CD4-positive, alpha-beta memory T cell (primary cell): ENCODE measurements at regions of chr7 and their contacts with region 1.

Region 1: GRCh38 chr7:22822486-22823141 is at the start of gene TOMM7:
- DNase-seq: peak; percentile 84 to 92 (median 91)
- H3K4me3 ChIP-seq: peak within 1 kb of the TSS; percentile 83 to 98
- H3K4me3 Mint-ChIP-seq: peak within 1 kb of the TSS; percentile 94 to 99 (median 98)
- H3K27ac ChIP-seq: peak within 1 kb of the TSS; percentile 85
- H3K27ac Mint-ChIP-seq: peak within 1 kb of the TSS; percentile 94 to 100 (median 98)
- H3K4me1 ChIP-seq: peaks cover 40% of the 10 kb centered on the region
- H3K4me1 Mint-ChIP-seq: peaks cover 19 to 50% (median 33%) of the 10 kb centered on the region in 4 donors
- H3K27me3 ChIP-seq: no peaks in the 10 kb centered on the region
- H3K27me3 Mint-ChIP-seq: peaks cover 5 to 17% of the 10 kb centered on the region in 2 donors
- total RNA-seq, gene TOMM7: 686 to 701 TPM

Region 2: DNA sequence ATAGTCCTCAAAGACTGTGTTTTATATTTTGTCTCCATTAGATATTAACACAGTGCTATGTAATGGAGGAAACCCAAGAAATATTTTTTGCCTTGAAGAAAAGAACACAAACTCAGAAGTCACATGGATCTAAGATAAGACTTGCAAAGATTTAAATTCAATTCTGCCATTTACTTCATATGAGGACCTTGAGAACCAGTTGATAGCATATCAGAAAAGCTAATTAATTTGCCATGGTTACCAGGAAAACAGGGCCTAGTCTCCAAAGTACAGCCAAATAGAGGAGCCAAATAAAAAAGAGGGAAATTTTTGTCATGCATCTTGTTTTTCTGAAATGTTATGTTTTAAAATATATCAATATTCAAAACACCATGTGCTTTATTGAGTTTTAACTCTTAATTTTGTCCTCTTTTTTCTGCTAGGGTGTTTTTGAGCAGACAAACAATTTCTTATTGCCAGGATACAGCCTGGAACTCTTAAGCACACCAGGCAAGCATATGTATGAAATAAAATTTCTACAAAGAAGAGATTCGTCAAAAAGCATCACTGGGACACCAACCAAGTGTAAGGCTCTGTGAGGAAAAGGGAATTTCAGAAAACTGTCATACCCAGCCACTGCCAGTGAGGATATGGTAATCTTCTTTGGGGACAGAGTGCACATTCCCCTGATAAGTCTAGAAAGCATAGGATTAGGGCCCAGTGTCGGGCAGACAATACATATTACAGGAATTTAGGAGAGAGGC is 10.7 kb after region 1 on chr7:
- CTCF ChIA-PET with region 1: no interaction called
- POLR2A ChIA-PET with region 1: no interaction called
- intact Hi-C with region 1: no loop called
- DNase-seq: no peak
- H3K4me3 ChIP-seq: no peak overlapping the region
- H3K4me3 Mint-ChIP-seq: no peak overlapping the region
- H3K27ac ChIP-seq: no peak overlapping the region
- H3K27ac Mint-ChIP-seq: no peak overlapping the region
- H3K4me1 ChIP-seq: no peaks in the 10 kb centered on the region
- H3K4me1 Mint-ChIP-seq: no peaks in the 10 kb centered on the region
- H3K27me3 ChIP-seq: no peaks in the 10 kb centered on the region
- H3K27me3 Mint-ChIP-seq: peaks cover 2 to 8% of the 10 kb centered on the region in 2 donors

Region 3: GRCh38 chr7:22854158-22855048 is 31.8 kb after region 1 on chr7:
- CTCF ChIA-PET with region 1: interaction called, 9 read pairs
- POLR2A ChIA-PET with region 1: interaction called, 4 read pairs
- intact Hi-C with region 1: loop called (anchors 1 kb)
- DNase-seq: peak; percentile 40 to 84 (median 77)
- H3K4me3 ChIP-seq: peak overlapping the region; percentile 63 to 93
- H3K4me3 Mint-ChIP-seq: peak overlapping the region; percentile 88 to 95 (median 95)
- H3K27ac ChIP-seq: peak overlapping the region; percentile 90
- H3K27ac Mint-ChIP-seq: peak overlapping the region; percentile 79 to 96 (median 93)
- H3K4me1 ChIP-seq: peaks cover 20% of the 10 kb centered on the region
- H3K4me1 Mint-ChIP-seq: peaks cover 8 to 20% (median 18%) of the 10 kb centered on the region in 4 donors
- H3K27me3 ChIP-seq: no peaks in the 10 kb centered on the region
- H3K27me3 Mint-ChIP-seq: peaks cover 0 to 2% of the 10 kb centered on the region in 2 donors

Region 4: DNA sequence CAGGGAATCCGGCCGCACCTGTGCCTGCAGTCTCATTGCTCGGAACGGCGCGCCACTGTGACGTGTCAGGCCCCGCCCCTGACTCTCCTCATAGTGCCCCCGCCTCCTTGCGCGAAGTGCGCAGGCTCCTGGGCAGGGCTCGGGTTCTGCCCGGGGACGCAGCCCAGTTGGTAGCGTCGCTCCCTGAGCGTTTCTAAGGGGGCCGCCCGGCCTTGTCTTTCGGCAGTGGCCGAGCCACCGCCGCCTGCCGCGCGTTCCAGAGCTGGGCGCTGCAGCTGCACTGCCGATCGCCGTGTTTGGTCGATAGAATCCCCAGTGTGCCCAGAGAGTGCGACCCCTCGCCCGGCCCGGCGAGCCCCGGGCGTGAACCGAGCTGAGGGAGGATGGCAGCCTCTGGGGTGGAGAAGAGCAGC is 283.0 kb after region 1 on chr7 and contains the start of gene KLHL7:
- CTCF ChIA-PET with region 1: no interaction called
- POLR2A ChIA-PET with region 1: interaction called, 4 read pairs
- intact Hi-C with region 1: loop called (anchors 1 kb)
- DNase-seq: peak; percentile 91 to 96 (median 93)
- H3K4me3 ChIP-seq: peak within 1 kb of the TSS; percentile 83 to 98
- H3K4me3 Mint-ChIP-seq: peak within 1 kb of the TSS; percentile 93 to 99 (median 97)
- H3K27ac ChIP-seq: peak within 1 kb of the TSS; percentile 89
- H3K27ac Mint-ChIP-seq: peak within 1 kb of the TSS; percentile 93 to 98 (median 96)
- H3K4me1 ChIP-seq: peaks cover 39% of the 10 kb centered on the region
- H3K4me1 Mint-ChIP-seq: peaks cover 28 to 56% (median 38%) of the 10 kb centered on the region in 4 donors
- H3K27me3 ChIP-seq: no peaks in the 10 kb centered on the region
- H3K27me3 Mint-ChIP-seq: no peaks in the 10 kb centered on the region
- total RNA-seq, gene KLHL7: 22.5 to 25.6 TPM